Activated CD4-positive, alpha-beta memory T cell treated with anti-CD3 and anti-CD28 coated beads, Interleukin-2, amount 10 ng/mL, durations not matched to agents 7 days and 5 days (primary cell): ENCODE measurements at regions of chr17 and their contacts with region 1.

Region 1: DNA sequence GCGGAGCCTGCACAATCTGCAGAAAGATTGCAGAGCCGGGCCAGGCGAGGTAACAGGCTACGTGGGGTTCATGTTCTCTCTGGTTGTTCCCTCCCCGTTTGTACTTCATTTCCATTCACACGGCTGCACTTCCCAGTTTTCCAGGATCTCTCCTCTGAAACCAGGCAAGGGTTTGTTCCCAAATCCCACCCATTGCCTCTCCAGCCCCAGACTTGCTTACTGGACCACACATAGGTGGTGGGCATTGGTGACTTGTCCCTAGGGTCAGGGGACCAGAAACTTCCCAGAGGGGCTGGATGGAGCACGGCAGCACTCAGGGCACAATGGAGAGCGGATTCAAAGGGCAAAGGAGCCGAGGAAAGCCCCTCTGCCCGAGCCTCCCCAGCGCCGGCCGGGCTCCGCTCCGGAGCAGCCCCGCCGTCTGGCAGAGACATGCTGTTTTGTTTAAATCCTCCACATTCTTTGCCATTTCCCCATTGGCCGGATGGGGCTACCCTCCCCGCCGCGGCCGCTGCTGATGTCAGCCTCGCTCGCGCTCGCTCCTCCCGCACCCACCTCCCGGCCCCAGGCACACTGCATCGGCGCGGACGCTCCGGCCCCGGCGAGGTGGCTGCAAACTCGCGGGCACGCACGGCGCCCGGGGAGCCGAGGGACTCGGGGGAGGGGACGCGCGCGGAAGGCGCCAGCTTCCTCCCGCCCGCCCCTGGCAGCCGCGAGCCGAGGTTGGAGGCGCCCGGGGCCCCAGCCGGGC is at the start of gene PITPNC1:
- DNase-seq: peak; percentile 90
- H3K4me3 Mint-ChIP-seq: peak within 1 kb of the TSS; percentile 86
- H3K27ac Mint-ChIP-seq: peak within 1 kb of the TSS; percentile 78
- H3K4me1 Mint-ChIP-seq: peaks cover 36% of the 10 kb centered on the region
- H3K27me3 Mint-ChIP-seq: peaks cover 6% of the 10 kb centered on the region
- total RNA-seq, gene PITPNC1: 29.1 to 31.1 TPM

Region 2: DNA sequence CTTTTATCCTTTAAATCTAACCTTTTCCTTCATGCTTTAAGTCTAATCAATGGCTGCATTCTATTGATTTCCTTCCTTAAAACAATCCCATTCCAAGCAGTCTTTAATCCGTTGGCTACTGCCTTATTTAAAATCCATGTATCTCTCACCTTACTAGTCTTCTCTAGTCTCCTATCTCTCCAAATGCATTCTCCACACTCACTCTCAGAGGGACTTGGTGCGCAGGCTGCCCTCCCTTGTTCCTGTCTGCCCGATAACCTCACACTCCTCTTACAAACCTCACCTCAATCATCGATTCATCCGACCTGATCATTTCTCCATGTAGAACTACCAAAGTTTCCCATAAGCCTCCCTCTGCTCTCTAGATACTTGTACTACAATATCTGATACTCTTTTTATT is 33.7 kb before region 1 on chr17:
- CTCF ChIA-PET with region 1: no interaction called
- POLR2A ChIA-PET with region 1: no interaction called
- DNase-seq: no peak
- H3K4me3 Mint-ChIP-seq: no peak overlapping the region
- H3K27ac Mint-ChIP-seq: no peak overlapping the region
- H3K4me1 Mint-ChIP-seq: peaks cover 2% of the 10 kb centered on the region
- H3K27me3 Mint-ChIP-seq: no peaks in the 10 kb centered on the region

Region 3: GRCh38 chr17:67359960-67360773 is 16.7 kb before region 1 on chr17:
- CTCF ChIA-PET with region 1: interaction called, 72 read pairs
- POLR2A ChIA-PET with region 1: interaction called, 76 read pairs
- DNase-seq: peak; percentile 67
- H3K4me3 Mint-ChIP-seq: peak overlapping the region; percentile 15
- H3K27ac Mint-ChIP-seq: peak overlapping the region; percentile 65
- H3K4me1 Mint-ChIP-seq: peaks cover 68% of the 10 kb centered on the region
- H3K27me3 Mint-ChIP-seq: no peaks in the 10 kb centered on the region

Region 4: GRCh38 chr17:67390646-67391384 is 13.9 kb after region 1 on chr17:
- CTCF ChIA-PET with region 1: interaction called, 46 read pairs
- POLR2A ChIA-PET with region 1: interaction called, 18 read pairs
- DNase-seq: peak; percentile 78
- H3K4me3 Mint-ChIP-seq: peak overlapping the region; percentile 40
- H3K27ac Mint-ChIP-seq: peak overlapping the region; percentile 78
- H3K4me1 Mint-ChIP-seq: peaks cover 45% of the 10 kb centered on the region
- H3K27me3 Mint-ChIP-seq: no peaks in the 10 kb centered on the region

Region 5: DNA sequence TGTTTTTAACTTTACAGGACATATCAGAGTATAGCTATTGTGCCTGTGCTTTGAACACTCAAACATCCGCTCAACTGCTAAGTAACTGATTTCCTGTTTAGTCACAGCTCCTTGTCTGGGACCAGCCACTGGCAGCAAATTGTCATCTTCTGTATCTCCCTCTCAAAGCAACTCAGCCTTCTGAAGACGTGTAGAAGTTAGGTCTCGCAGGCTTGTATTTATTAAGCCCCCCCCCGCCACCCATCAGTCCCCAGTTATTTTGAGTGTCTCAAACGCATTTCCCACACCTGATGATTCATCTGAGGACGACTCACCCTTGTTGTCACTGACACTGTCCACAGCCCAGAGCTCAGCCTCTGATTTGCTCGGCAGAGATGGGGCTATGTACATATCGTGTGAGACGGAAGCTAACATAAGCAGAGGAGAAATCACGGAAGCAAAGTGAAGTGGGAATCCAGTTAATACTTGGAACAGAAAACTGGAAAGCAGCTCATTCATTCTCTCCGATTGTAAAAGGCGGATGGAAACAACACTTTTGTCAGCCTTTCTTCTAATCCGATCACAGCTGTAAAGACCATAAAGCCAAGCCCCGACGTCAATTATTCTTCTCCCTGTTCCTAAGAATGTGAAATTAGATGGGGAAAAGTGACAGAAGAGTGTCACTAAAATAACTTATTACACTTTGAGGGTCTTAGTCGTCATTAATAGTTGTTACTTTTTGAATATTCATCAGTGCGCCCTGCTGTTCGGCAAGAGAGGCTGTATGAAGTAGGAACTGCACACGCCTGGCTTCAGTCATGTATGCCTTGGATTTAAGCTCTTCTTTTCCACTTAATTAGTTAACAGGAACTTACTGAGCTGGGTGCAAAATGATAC is 64.4 kb after region 1 on chr17:
- CTCF ChIA-PET with region 1: interaction called, 32 read pairs
- POLR2A ChIA-PET with region 1: interaction called, 43 read pairs
- DNase-seq: peak; percentile 79
- H3K4me3 Mint-ChIP-seq: peak overlapping the region; percentile 74
- H3K27ac Mint-ChIP-seq: peak overlapping the region; percentile 99
- H3K4me1 Mint-ChIP-seq: peaks cover 42% of the 10 kb centered on the region
- H3K27me3 Mint-ChIP-seq: no peaks in the 10 kb centered on the region

Region 6: DNA sequence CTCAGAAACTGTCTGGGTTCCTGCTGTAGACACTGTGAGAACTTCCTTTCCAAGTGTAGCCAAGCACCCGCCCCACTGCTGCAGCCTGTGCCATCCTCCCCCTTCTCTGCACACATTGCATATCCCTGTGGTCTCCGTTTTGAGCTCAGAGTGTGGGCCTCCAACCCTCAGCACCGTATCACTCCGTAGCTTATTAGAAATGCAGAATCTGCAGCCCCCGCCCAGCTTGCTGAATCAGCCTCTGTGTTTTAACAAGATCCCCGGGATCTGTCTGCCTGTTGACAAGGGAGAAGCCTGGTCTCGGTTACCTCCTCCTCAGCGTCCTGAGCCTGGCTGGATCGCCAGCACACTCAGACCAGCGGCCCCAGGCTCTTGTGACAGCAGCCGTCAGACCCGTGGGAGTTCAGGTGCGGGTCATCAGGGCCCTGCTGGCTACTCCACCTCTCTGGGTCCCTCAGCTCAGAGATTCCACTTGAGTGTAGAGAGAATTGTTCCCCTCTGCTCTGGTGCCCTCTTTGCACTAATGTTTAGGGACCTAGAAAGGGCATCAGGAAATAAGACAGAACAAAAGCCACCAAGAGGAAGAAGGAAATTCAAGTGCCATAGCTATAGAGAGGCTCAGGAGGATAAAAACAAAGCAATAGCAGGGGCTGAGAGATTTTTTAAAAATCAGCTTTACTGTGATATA is 92.4 kb after region 1 on chr17:
- CTCF ChIA-PET with region 1: interaction called, 138 read pairs
- POLR2A ChIA-PET with region 1: interaction called, 86 read pairs
- DNase-seq: no peak
- H3K4me3 Mint-ChIP-seq: no peak overlapping the region
- H3K27ac Mint-ChIP-seq: no peak overlapping the region
- H3K4me1 Mint-ChIP-seq: peaks cover 28% of the 10 kb centered on the region
- H3K27me3 Mint-ChIP-seq: peaks cover 2% of the 10 kb centered on the region

Region 7: GRCh38 chr17:67602956-67603355 is 226.0 kb after region 1 on chr17:
- CTCF ChIA-PET with region 1: interaction called, 17 read pairs
- POLR2A ChIA-PET with region 1: interaction called, 3 read pairs
- DNase-seq: peak; percentile 54
- H3K4me3 Mint-ChIP-seq: no peak overlapping the region
- H3K27ac Mint-ChIP-seq: no peak overlapping the region
- H3K4me1 Mint-ChIP-seq: no peaks in the 10 kb centered on the region
- H3K27me3 Mint-ChIP-seq: no peaks in the 10 kb centered on the region

Region 8: DNA sequence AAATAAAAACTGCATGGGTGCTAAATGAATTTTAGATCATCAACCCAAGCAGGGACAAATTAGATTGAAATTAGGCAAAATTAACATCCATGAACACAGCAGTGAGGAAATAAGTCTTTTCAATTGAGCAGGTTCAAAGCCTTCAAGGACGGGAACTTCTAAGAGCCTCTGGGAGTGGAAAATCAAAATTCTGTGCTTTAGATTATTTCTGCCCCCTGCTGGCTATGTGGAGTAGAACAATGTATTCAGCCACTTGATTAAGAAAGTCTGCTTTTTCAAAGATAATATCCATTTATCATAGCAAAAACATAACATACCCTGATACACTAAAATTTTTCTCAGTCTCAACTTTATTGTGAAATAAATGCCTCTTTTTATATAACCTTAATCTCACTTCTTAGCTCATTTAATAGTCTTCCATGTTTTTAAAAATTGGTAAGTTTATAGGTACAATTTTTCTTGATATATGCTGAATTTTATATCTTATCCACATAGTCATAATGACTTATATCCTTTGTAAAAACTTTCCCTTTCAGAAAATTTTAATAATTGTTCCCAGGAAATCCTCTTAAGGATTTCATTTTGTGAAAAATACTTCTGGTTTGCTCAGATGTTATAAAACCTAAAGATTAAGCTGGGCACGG is 312.7 kb after region 1 on chr17:
- CTCF ChIA-PET with region 1: interaction called, 69 read pairs
- POLR2A ChIA-PET with region 1: interaction called, 3 read pairs
- DNase-seq: peak; percentile 45
- H3K4me3 Mint-ChIP-seq: no peak overlapping the region
- H3K27ac Mint-ChIP-seq: no peak overlapping the region
- H3K4me1 Mint-ChIP-seq: no peaks in the 10 kb centered on the region
- H3K27me3 Mint-ChIP-seq: no peaks in the 10 kb centered on the region